CD4-positive, alpha-beta memory T cell (primary cell): ENCODE measurements at regions of chr15 and their contacts with region 1.

Region 1: GRCh38 chr15:98311566-98312188 is 336.7 kb upstream of the IGF1R start:
- DNase-seq: peak; percentile 35 to 46 (median 45)
- H3K4me3 ChIP-seq: no peak overlapping the region
- H3K4me3 Mint-ChIP-seq: no peak overlapping the region
- H3K27ac ChIP-seq: no peak overlapping the region
- H3K27ac Mint-ChIP-seq: no peak overlapping the region
- H3K4me1 ChIP-seq: no peaks in the 10 kb centered on the region
- H3K4me1 Mint-ChIP-seq: peaks cover 0 to 2% (median 0%) of the 10 kb centered on the region in 4 donors
- H3K27me3 ChIP-seq: no peaks in the 10 kb centered on the region
- H3K27me3 Mint-ChIP-seq: peaks cover 3 to 8% of the 10 kb centered on the region in 2 donors

Region 2: DNA sequence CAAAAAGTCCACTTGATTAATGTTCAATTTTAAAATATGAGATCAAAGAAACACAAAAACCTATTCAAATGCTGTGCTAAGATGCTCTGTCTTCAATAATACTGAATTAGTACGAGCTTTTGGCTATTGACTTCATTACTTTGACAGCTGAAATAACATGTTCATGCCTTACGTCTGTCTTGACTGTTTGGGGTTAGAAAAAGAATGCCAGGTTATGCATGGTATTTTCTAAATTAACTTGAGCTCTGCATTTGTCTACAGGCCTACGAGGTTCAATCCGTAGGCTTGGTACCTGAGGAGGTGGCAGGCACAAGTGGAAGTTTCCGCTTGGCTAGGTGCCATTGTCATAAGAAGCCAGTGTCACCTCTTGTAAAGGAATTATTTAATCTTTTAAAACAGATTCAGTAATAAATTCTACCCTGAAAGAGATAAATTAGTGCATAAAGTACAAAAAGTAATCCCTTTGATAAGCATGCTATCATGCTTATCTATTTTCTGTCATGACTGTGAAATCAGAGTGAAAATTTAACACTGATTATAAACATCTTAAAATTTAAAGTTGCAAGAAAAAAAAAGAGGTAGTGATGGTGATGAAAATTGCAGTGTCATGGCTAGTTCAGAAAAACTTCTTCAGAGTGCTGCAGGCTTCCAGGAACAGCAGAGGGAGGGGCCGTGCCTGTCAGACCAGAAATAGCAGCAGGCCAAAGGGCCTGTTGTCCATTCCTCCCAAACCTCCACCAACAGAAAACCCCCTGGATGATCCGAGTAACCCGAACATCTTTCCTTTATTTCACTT is 235.5 kb before region 1 on chr15:
- CTCF ChIA-PET with region 1: no interaction called
- POLR2A ChIA-PET with region 1: no interaction called
- intact Hi-C with region 1: no loop called
- DNase-seq: no peak
- H3K4me3 ChIP-seq: no peak overlapping the region
- H3K4me3 Mint-ChIP-seq: no peak overlapping the region
- H3K27ac ChIP-seq: no peak overlapping the region
- H3K27ac Mint-ChIP-seq: no peak overlapping the region
- H3K4me1 ChIP-seq: no peaks in the 10 kb centered on the region
- H3K4me1 Mint-ChIP-seq: no peaks in the 10 kb centered on the region
- H3K27me3 ChIP-seq: no peaks in the 10 kb centered on the region
- H3K27me3 Mint-ChIP-seq: no peaks in the 10 kb centered on the region

Region 3: GRCh38 chr15:98321896-98322295 is 10.2 kb after region 1 on chr15:
- CTCF ChIA-PET with region 1: interaction called, 17 read pairs
- POLR2A ChIA-PET with region 1: no interaction called
- intact Hi-C with region 1: no loop called
- DNase-seq: no peak
- H3K4me3 ChIP-seq: no peak overlapping the region
- H3K4me3 Mint-ChIP-seq: no peak overlapping the region
- H3K27ac ChIP-seq: no peak overlapping the region
- H3K27ac Mint-ChIP-seq: no peak overlapping the region
- H3K4me1 ChIP-seq: no peaks in the 10 kb centered on the region
- H3K4me1 Mint-ChIP-seq: no peaks in the 10 kb centered on the region
- H3K27me3 ChIP-seq: no peaks in the 10 kb centered on the region
- H3K27me3 Mint-ChIP-seq: no peaks in the 10 kb centered on the region

Region 4: DNA sequence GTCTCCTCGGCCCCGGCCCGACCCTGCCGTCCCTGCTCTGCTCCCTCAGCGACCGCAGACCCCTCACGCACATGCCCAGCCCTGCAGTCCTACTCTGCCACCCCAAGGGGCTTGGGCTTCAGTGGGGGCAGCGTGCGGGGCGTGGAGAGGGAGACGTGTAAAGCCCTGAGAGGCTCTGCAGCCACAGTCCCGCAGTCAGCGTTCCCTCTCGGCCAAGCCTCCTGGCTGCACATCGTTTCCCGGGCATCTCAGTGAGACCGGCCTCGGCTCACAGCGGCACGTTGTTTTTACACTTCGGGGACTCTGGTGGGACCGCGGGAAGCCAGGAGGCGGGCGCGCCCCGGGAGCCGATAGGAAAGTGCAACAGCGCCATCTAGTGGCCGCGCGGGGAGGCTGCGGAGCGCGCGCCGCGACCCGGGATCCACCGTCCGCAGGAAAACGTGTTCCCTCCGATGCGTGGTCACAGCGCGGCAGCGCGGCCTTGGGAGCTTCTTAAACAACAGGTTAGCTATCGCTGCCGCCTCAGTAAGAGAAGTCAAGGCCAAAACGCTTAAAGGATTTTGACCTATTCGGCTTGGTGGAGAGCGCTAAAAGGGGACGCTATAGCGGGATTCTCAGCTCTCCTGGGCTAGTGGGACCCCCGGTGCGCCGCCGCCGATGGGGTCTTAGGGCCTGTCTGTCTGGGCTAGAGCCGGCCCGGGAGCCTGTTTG is 109.9 kb after region 1 on chr15:
- CTCF ChIA-PET with region 1: interaction called, 38 read pairs
- POLR2A ChIA-PET with region 1: no interaction called
- intact Hi-C with region 1: loop called (anchors 1 kb)
- DNase-seq: peak; percentile 35 to 42 (median 39)
- H3K4me3 ChIP-seq: peak overlapping the region in 1 of 2 donors; percentile 19
- H3K4me3 Mint-ChIP-seq: peak overlapping the region in 5 of 8 donors; percentile 21 to 62 (median 48)
- H3K27ac ChIP-seq: no peak overlapping the region
- H3K27ac Mint-ChIP-seq: no peak overlapping the region
- H3K4me1 ChIP-seq: peaks cover 6% of the 10 kb centered on the region
- H3K4me1 Mint-ChIP-seq: peaks cover 0 to 2% (median under 1%) of the 10 kb centered on the region in 4 donors
- H3K27me3 ChIP-seq: no peaks in the 10 kb centered on the region
- H3K27me3 Mint-ChIP-seq: peaks cover 27 to 31% of the 10 kb centered on the region in 2 donors

Region 5: DNA sequence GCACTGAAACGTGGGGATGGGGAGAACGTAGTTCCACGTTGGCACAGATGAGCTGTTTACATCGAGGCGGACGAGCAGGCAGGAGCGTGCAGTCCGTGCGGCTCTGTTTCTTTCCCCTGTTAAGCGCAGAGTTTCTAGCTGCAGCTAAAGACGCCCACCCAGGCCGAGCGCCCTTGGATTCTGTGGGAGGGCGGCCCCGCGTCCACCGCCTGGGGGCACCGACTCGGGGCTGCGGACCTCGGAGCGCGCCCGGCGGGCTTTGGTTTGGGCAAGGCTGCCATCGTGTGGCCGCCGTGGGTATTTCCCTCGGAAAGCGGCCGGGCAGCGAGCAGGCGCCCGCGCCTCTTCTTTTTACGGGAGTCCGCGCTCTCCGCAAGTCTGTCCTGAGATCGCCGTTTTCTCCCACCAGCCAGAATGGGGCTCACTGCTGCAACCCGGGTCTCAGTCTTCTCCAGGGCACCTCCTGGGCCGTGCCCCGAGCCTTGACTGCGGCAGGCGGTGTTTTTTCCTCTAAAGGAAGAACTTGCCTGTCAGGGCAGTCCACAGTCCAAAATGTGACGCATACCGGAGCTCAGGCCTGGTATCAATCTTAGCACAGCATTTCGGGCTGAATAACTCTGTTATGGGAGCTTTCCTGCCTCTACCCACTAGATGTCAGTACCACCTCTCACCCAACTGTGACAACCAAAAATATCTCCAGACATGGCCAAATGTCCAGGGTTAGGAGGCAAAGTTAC is 116.7 kb after region 1 on chr15:
- CTCF ChIA-PET with region 1: interaction called, 38 read pairs
- POLR2A ChIA-PET with region 1: no interaction called
- intact Hi-C with region 1: loop called (anchors 1 kb)
- DNase-seq: peak in 4 of 5 donors; percentile 33 to 43 (median 36)
- H3K4me3 ChIP-seq: no peak overlapping the region
- H3K4me3 Mint-ChIP-seq: peak overlapping the region; percentile 36 to 71 (median 63)
- H3K27ac ChIP-seq: no peak overlapping the region
- H3K27ac Mint-ChIP-seq: no peak overlapping the region
- H3K4me1 ChIP-seq: peaks cover 4% of the 10 kb centered on the region
- H3K4me1 Mint-ChIP-seq: peaks cover 2 to 10% (median 8%) of the 10 kb centered on the region in 4 donors
- H3K27me3 ChIP-seq: no peaks in the 10 kb centered on the region
- H3K27me3 Mint-ChIP-seq: peaks cover 26 to 30% of the 10 kb centered on the region in 2 donors

Region 6: DNA sequence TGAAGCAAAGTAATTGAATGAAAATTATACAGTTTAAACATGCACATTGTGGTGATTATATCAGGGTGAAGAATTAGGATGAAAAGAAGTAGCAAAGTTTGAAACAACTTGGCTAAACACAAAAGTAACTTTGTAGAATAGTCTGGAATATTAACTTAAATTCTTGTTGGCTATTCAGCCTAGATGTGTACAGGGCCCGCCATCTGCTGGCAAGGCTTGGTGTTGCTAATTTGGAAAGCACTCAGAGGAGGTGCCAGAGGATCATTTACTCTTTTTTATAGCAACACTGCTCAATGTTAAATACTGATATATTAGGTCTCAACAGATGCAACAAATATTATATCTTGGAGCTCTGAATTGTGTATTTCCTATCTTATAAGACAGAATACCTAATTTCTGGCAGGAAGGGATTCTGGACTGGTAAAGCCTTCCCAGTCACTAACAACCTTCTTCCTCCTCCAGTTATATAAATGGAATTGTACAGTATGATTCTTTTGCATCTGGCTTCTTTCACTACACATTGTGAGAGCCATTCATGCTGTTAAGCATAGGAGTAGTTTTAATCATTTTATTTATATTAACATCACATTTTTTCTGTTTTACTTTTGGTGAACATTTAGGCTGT is 901.6 kb after region 1 on chr15:
- CTCF ChIA-PET with region 1: no interaction called
- POLR2A ChIA-PET with region 1: no interaction called
- intact Hi-C with region 1: loop called (anchors 5 kb)
- DNase-seq: peak; percentile 22 to 61 (median 37)
- H3K4me3 ChIP-seq: no peak overlapping the region
- H3K4me3 Mint-ChIP-seq: no peak overlapping the region
- H3K27ac ChIP-seq: no peak overlapping the region
- H3K27ac Mint-ChIP-seq: no peak overlapping the region
- H3K4me1 ChIP-seq: no peaks in the 10 kb centered on the region
- H3K4me1 Mint-ChIP-seq: no peaks in the 10 kb centered on the region
- H3K27me3 ChIP-seq: no peaks in the 10 kb centered on the region
- H3K27me3 Mint-ChIP-seq: peaks cover 4 to 10% of the 10 kb centered on the region in 2 donors